WTC11 (cell line): ENCODE measurements at regions of chr9 and their contacts with region 1.

Region 1: GRCh38 chr9:127525401-127526187 is 74.3 kb downstream of the LRSAM1 start:
- DNase-seq: no peak
- ATAC-seq: no peak
- H3K4me3 Mint-ChIP-seq: no peak overlapping the region
- H3K27ac Mint-ChIP-seq: no peak overlapping the region; the same call in 1 of the 2 replicates
- H3K4me1 Mint-ChIP-seq: peaks cover 32% of the 10 kb centered on the region
- H3K27me3 Mint-ChIP-seq: no peaks in the 10 kb centered on the region; the same call in 1 of the 2 replicates
- CTCF ChIP-seq: peak; percentile 61

Region 2: GRCh38 chr9:126626127-126626925 is 899.3 kb before region 1 on chr9:
- CTCF ChIA-PET with region 1: no interaction called
- POLR2A ChIA-PET with region 1: no interaction called
- DNase-seq: peak; percentile 55
- ATAC-seq: peak; percentile 11
- H3K4me3 Mint-ChIP-seq: peak overlapping the region; percentile 72
- H3K27ac Mint-ChIP-seq: no peak overlapping the region
- H3K4me1 Mint-ChIP-seq: peaks cover 54% of the 10 kb centered on the region
- H3K27me3 Mint-ChIP-seq: peaks cover 100% of the 10 kb centered on the region
- CTCF ChIP-seq: no peak

Region 3: GRCh38 chr9:127347831-127348779 is 177.5 kb before region 1 on chr9:
- CTCF ChIA-PET with region 1: no interaction called
- POLR2A ChIA-PET with region 1: no interaction called
- DNase-seq: no peak
- ATAC-seq: peak; percentile 87
- H3K4me3 Mint-ChIP-seq: no peak overlapping the region
- H3K27ac Mint-ChIP-seq: peak overlapping the region; percentile 64; the same call in 1 of the 2 replicates
- H3K4me1 Mint-ChIP-seq: peaks cover 19% of the 10 kb centered on the region
- H3K27me3 Mint-ChIP-seq: no peaks in the 10 kb centered on the region
- CTCF ChIP-seq: no peak

Region 4: DNA sequence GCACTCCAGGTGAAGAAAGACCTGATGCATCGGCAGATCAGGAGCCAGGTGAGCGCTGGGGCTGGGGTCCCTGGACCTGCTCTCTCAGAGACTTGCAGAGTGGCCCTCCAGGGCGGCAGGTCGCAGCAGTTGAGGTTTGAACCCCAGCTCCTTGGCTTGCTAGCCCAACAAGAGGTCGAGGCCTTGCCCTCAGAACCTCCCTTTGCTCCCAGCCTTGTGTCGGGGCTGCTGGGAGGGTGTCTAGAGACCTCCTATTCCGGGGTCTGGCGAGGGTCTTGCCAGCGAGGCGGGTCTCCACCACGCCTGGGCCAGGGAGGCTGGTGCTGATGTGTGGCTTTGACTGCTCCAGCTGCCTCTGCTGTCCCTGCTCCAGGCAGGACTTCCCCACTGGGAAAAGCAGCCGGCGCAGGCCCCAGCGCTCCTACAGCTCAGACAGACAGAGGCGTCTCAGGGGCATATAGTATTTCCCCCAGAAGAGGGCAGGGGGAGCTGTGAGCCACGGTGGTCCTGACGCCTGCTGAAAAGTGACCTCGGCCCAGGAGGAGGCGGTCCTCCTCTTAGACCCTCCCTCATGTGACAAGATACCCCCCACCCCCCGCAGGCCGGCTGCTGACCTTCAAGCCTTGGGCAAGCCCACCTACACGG is 36.0 kb before region 1 on chr9:
- CTCF ChIA-PET with region 1: interaction called, 17 read pairs
- POLR2A ChIA-PET with region 1: no interaction called
- DNase-seq: peak; percentile 79
- ATAC-seq: peak; percentile 98
- H3K4me3 Mint-ChIP-seq: no peak overlapping the region
- H3K27ac Mint-ChIP-seq: peak overlapping the region; percentile 43; the same call in 1 of the 2 replicates
- H3K4me1 Mint-ChIP-seq: peaks cover 5% of the 10 kb centered on the region
- H3K27me3 Mint-ChIP-seq: no peaks in the 10 kb centered on the region
- CTCF ChIP-seq: no peak

Region 5: GRCh38 chr9:127537792-127538191 is 12.2 kb after region 1 on chr9:
- CTCF ChIA-PET with region 1: interaction called, 58 read pairs
- POLR2A ChIA-PET with region 1: no interaction called
- DNase-seq: peak; percentile 48
- ATAC-seq: peak; percentile 87
- H3K4me3 Mint-ChIP-seq: no peak overlapping the region
- H3K27ac Mint-ChIP-seq: no peak overlapping the region
- H3K4me1 Mint-ChIP-seq: peaks cover 15% of the 10 kb centered on the region
- H3K27me3 Mint-ChIP-seq: no peaks in the 10 kb centered on the region
- CTCF ChIP-seq: no peak

Region 6: DNA sequence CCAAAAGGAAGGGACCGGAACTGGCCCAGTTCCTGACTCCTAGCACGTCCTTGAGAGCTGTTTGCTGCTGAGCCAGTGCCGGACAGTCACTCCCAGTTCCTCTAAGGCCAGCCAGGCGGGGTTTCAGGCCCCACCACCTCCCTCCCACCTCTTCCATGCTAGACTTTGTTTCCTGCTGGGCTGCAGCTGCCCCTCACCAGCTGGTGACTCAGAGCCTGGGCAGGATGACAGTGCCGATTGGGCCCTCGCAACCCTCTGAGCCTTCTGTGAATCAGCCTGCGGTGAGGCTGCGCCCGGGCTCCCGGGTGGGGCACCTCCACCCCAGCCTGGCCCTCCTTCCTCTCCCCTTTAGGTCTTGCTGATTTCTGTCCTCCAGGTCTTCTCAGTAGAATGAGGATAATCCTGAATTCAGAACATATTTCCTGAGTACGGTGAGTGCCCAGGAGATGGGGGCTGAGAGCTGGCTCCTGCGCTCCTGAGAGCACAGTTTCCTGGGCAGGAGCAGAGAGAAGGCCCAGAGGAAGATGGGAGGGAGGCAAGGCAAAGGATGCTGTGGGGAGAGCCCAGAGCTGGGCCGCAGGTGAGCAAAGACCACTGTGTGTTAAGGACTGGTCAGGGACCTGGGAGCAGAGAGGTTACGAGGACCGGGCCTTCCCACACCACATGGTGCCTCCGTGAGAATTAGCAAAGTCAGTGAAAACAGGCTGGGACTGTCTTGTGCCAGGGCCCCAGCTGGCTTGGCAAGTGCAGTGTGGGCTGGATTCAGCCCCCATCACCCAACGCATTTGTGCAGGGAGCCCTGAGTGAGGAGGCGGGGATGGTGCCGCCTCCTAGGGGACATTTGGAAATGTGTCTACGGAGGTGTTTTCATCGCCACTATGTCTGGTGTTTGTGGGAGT is 53.6 kb after region 1 on chr9:
- CTCF ChIA-PET with region 1: interaction called, 19 read pairs
- POLR2A ChIA-PET with region 1: no interaction called
- DNase-seq: peak; percentile 50
- ATAC-seq: peak; percentile 75
- H3K4me3 Mint-ChIP-seq: no peak overlapping the region
- H3K27ac Mint-ChIP-seq: 0 out of 2 replicates have a peak overlapping the region, but pooled peaks have one; percentile 48
- H3K4me1 Mint-ChIP-seq: peaks cover 16% of the 10 kb centered on the region
- H3K27me3 Mint-ChIP-seq: no peaks in the 10 kb centered on the region
- CTCF ChIP-seq: no peak

Region 7: DNA sequence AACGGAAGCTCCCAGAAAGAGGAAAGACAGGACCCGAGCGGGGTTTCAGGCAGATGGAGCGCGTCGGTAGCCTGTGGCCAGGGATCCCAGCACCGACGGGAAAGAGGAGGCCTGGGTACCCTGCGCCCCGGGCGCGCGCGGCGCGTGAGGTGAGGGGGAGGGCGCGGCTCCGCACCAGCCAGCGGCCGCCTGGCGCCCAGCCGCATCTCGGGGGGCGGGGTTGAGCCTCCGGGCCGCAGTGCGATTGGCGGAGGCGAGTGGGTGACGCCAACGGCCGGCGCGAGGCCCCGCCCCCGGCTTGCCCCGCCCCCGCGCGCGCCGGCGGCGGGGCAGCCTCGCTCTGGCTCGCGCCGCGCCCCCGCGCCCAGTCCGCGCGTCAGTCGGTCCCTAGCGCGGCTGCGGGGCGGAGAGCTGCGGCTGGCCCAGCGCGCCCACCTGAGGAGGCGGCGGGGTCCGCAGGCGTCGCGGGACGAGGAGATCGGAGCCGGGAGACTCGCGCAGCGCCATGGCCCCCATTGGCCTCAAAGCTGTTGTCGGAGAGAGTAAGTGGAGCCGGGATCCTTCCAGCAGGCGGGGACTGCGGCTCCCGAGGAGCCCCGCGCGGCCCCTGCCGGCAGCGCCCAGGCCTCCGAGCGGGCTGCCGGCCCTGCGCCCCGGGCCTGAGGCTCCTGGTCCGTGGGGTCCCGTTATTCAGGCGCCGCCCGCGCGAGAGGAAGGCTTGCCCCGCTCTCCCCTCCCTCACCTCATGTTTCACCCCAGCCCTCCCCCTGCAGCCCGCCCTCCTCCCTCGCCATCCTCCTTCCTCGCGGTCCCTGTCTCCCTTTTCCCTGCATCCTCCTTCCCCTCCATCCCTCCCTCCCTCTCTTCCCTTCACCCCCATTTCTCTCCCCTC is 86.6 kb after region 1 on chr9 and contains the start of gene STXBP1:
- CTCF ChIA-PET with region 1: interaction called, 16 read pairs
- POLR2A ChIA-PET with region 1: no interaction called
- DNase-seq: peak; percentile 90
- ATAC-seq: peak; percentile 74
- H3K4me3 Mint-ChIP-seq: peak within 1 kb of the TSS; percentile 95
- H3K27ac Mint-ChIP-seq: peak within 1 kb of the TSS; percentile 84
- H3K4me1 Mint-ChIP-seq: peaks cover 30% of the 10 kb centered on the region
- H3K27me3 Mint-ChIP-seq: peaks cover 41% of the 10 kb centered on the region
- CTCF ChIP-seq: no peak
- total RNA-seq, gene STXBP1: 37.1 to 45.6 TPM (median 40.3 TPM) in 3 replicates

Region 8: GRCh38 chr9:128231638-128232527 is 706.3 kb after region 1 on chr9:
- CTCF ChIA-PET with region 1: no interaction called
- POLR2A ChIA-PET with region 1: no interaction called
- DNase-seq: no peak
- ATAC-seq: peak; percentile 30
- H3K4me3 Mint-ChIP-seq: no peak overlapping the region
- H3K27ac Mint-ChIP-seq: no peak overlapping the region
- H3K4me1 Mint-ChIP-seq: 0 out of 2 replicates have a peak, but pooled peaks cover 4% of the 10 kb centered on the region
- H3K27me3 Mint-ChIP-seq: peaks cover 4% of the 10 kb centered on the region
- CTCF ChIP-seq: no peak